Activated CD8-positive, alpha-beta memory T cell treated with anti-CD3 and anti-CD28 coated beads, Interleukin-2, amount 10 ng/mL, durations not matched to agents 7 days and 5 days (primary cell): ENCODE measurements at regions of chr11 and their contacts with region 1.

Region 1: DNA sequence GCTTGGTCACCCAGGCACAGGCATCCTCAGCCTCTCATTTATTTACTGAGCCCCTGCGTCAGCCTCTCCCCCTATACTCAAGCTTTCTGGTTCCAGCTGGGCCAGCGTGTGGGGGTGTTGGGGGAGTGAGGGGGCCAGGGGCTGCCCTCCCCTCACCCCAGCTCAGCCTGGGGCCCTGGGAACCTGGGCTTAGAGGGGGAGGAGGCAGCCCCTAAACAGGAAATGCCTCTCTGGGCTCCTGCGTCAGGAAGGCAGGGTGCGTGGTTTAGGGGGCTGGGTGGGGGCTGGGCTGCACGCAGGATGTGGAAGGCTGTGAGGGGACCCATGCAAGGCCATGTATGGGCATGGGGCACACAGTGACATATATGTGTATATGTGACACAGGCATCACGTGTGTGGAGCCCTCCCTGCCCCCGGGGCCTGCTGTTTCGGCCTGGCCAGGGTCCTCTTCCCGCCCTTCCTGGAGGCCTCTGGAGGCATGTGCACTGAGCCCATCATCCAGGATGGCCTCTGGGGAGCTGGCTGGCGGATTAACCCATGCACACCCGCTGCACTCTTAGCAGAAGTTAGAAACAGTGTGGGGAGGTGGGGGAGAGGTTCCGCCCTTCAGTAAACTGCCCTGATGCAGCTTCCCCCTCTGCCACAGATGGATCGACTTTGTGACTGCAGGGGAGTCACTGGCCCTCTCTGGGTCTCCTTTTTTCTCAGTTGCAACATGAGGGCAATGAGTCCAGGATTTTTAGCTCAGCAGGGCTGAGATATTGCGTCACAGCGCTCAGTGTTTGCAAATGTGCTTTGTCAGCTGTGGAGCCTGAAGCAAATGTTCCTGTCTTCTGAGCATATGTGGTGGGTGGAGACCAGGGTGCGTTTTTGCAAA is 1.1 kb upstream of the CD248 start:
- DNase-seq: peak; percentile 95
- ATAC-seq: peak; percentile 77
- H3K4me3 Mint-ChIP-seq: peak overlapping the region; percentile 56
- H3K27ac Mint-ChIP-seq: peak overlapping the region; percentile 99
- H3K4me1 Mint-ChIP-seq: peaks cover 60% of the 10 kb centered on the region
- H3K27me3 Mint-ChIP-seq: no peaks in the 10 kb centered on the region

Region 2: GRCh38 chr11:66251809-66252208 is 66.2 kb before region 1 on chr11:
- CTCF ChIA-PET with region 1: no interaction called
- DNase-seq: no peak
- ATAC-seq: no peak
- H3K4me3 Mint-ChIP-seq: no peak overlapping the region
- H3K27ac Mint-ChIP-seq: no peak overlapping the region
- H3K4me1 Mint-ChIP-seq: peaks cover 9% of the 10 kb centered on the region
- H3K27me3 Mint-ChIP-seq: no peaks in the 10 kb centered on the region

Region 3: DNA sequence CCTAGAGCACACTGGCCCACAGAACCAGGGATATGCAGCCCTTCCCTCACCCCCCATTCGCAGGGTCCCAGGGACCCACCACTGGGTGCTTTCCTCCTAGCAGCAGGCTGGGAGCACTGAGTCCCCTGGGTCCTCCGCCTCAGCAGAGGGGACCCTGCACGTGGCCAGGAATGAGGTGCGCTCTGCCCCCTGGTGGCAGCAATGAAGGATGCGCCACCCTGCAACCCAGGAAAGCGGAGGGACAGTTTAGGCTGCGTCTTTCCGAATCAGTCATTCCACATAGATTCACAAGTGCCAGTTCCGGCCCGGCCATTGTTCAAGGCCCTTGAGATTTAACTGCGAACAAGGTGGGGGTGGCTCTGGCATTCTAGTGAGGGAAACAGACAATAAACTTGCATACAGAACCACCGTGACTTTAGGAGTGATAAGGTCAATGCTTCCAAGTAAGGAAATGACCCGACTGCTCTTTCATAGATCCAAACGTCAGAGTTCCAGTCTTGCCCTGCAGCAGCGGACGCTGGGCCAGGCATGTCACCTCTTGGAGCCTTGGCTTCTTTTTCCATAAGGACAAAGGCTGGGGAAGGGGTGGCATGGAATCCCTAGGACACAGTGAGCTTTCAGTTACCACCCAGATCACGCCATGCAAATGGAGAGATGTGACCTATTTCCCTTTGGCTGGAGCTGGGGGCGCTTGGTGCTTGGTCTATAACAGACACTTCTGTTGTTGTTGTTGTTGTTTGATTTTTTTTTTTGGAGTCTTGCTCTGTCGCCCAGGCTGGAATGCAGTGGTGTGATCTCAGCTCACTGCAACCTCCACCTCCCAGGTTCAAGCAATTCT is 10.6 kb after region 1 on chr11:
- CTCF ChIA-PET with region 1: interaction called, 174 read pairs
- DNase-seq: peak; percentile 89
- ATAC-seq: peak; percentile 85
- H3K4me3 Mint-ChIP-seq: peak overlapping the region; percentile 10
- H3K27ac Mint-ChIP-seq: peak overlapping the region; percentile 81
- H3K4me1 Mint-ChIP-seq: peaks cover 51% of the 10 kb centered on the region
- H3K27me3 Mint-ChIP-seq: no peaks in the 10 kb centered on the region